Activated naive CD4-positive, alpha-beta T cell treated with anti-CD3 and anti-CD28 coated beads for 36 hours (primary cell): ENCODE measurements at regions of chr13 and their contacts with region 1.

Region 1: DNA sequence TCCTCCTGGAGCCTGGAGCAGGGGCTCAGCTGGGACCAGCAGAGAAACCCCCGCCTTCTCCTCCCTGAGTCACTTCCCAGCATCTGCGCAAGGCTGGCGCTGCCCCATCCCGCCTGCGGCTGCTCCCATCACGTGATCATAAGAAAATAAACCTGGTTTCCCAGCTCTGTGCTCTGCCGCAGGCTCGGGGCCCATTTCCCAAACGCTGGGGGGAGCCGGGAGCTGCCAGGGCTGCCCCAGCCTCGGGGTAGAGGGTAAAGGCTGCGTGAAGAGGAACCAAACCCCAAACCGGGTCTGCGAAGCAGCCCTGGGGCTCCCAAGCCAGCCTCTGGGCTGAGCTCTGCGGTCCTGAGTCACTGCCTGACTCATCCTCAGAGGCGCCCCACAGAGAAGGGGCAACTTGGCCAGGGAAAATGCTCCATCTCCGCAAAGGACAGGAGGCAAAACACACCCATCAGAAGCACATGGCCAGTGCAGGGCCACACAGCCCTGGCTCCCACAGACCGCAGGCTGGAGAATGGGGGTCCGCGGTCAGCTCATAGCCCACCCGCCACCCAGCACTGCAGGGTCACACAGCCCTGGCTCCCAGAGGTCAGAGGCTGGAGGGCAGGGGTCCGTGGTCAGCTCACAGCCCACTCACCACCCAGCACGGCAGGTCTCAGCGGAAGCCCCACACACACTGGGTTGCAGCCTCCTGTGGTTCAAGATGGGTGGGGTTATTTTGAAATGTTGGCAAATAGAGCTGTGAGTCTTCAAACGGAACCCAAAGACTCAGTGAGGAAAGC is 67.1 kb downstream of the RASA3 start:
- DNase-seq: peak; percentile 90
- H3K4me3 Mint-ChIP-seq: peak overlapping the region; percentile 67
- H3K27ac Mint-ChIP-seq: peak overlapping the region; percentile 95
- H3K4me1 Mint-ChIP-seq: peaks cover 67% of the 10 kb centered on the region
- H3K27me3 Mint-ChIP-seq: no peaks in the 10 kb centered on the region

Region 2: GRCh38 chr13:113816946-113817859 is 248.1 kb before region 1 on chr13:
- CTCF ChIA-PET with region 1: no interaction called
- intact Hi-C with region 1: loop called (anchors 1 kb)
- DNase-seq: peak; percentile 94
- H3K4me3 Mint-ChIP-seq: peak overlapping the region; percentile 91
- H3K27ac Mint-ChIP-seq: no peak overlapping the region
- H3K4me1 Mint-ChIP-seq: peaks cover 21% of the 10 kb centered on the region
- H3K27me3 Mint-ChIP-seq: no peaks in the 10 kb centered on the region

Region 3: GRCh38 chr13:114110091-114110829 is 44.9 kb after region 1 on chr13:
- CTCF ChIA-PET with region 1: interaction called, 23 read pairs
- intact Hi-C with region 1: loop called (anchors 1 kb)
- DNase-seq: peak; percentile 88
- H3K4me3 Mint-ChIP-seq: peak overlapping the region; percentile 82
- H3K27ac Mint-ChIP-seq: peak overlapping the region; percentile 90
- H3K4me1 Mint-ChIP-seq: peaks cover 83% of the 10 kb centered on the region
- H3K27me3 Mint-ChIP-seq: no peaks in the 10 kb centered on the region

Region 4: GRCh38 chr13:114143806-114144605 is 78.7 kb after region 1 on chr13:
- CTCF ChIA-PET with region 1: no interaction called
- intact Hi-C with region 1: loop called (anchors 1 kb)
- DNase-seq: peak; percentile 70
- H3K4me3 Mint-ChIP-seq: no peak overlapping the region
- H3K27ac Mint-ChIP-seq: peak overlapping the region; percentile 54
- H3K4me1 Mint-ChIP-seq: peaks cover 40% of the 10 kb centered on the region
- H3K27me3 Mint-ChIP-seq: no peaks in the 10 kb centered on the region